ENCODE measurements at regions of chr2 and their contacts with region 1.

Region 1: GRCh38 chr2:36147670-36148390 is 207.7 kb upstream of the CRIM1 start:
- DNase-seq: no peak
- H3K4me3 Mint-ChIP-seq: no peak overlapping the region
- H3K27ac Mint-ChIP-seq: no peak overlapping the region
- H3K4me1 Mint-ChIP-seq: peaks cover 14% of the 10 kb centered on the region
- H3K27me3 Mint-ChIP-seq: peaks cover 16% of the 10 kb centered on the region

Region 2: DNA sequence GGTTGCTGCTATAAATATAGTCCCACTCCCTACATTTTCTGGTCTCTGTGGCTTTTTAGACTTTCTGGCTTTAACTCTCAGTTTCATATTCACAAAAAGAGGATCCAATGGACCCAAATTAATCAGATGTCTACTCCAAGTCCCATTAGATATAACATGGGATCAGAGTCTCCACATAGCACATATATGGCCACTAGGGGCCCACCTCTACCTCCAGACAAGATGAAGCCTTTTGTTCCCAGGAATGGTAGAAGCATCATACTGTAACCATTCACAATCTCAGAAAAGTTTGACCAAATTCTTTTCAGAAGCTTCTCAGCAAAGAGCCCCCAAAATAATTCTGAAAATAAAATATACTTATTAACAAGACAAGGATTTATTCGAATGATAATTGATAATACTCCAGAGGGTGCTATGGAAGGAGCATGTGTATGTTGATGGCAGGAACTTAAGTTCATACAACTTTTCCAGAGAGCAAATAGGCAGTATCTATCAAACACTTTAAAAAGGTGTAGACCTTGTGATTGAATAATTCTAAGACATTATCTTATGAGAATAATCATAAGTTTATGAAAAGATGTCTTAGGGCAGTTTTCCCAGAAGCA is 174.6 kb before region 1 on chr2:
- CTCF ChIA-PET with region 1: interaction called, 3 read pairs
- POLR2A ChIA-PET with region 1: no interaction called
- intact Hi-C with region 1: loop called (anchors 10 kb)
- DNase-seq: no peak
- H3K4me3 Mint-ChIP-seq: no peak overlapping the region
- H3K27ac Mint-ChIP-seq: no peak overlapping the region
- H3K4me1 Mint-ChIP-seq: peaks cover 2% of the 10 kb centered on the region
- H3K27me3 Mint-ChIP-seq: no peaks in the 10 kb centered on the region

Region 3: GRCh38 chr2:36123995-36124394 is 23.8 kb before region 1 on chr2:
- CTCF ChIA-PET with region 1: no interaction called
- POLR2A ChIA-PET with region 1: interaction called, 3 read pairs
- intact Hi-C with region 1: loop called (anchors 1 kb)
- DNase-seq: no peak
- H3K4me3 Mint-ChIP-seq: no peak overlapping the region
- H3K27ac Mint-ChIP-seq: no peak overlapping the region
- H3K4me1 Mint-ChIP-seq: peaks cover 9% of the 10 kb centered on the region
- H3K27me3 Mint-ChIP-seq: peaks cover 35% of the 10 kb centered on the region

Region 4: GRCh38 chr2:36307441-36307840 is 159.6 kb after region 1 on chr2:
- CTCF ChIA-PET with region 1: no interaction called
- POLR2A ChIA-PET with region 1: no interaction called
- intact Hi-C with region 1: loop called (anchors 1 kb)
- DNase-seq: no peak
- H3K4me3 Mint-ChIP-seq: no peak overlapping the region
- H3K27ac Mint-ChIP-seq: no peak overlapping the region
- H3K4me1 Mint-ChIP-seq: peaks cover 25% of the 10 kb centered on the region
- H3K27me3 Mint-ChIP-seq: peaks cover 2% of the 10 kb centered on the region